ENCODE measurements at regions of chr9 and their contacts with region 1.

Region 1: DNA sequence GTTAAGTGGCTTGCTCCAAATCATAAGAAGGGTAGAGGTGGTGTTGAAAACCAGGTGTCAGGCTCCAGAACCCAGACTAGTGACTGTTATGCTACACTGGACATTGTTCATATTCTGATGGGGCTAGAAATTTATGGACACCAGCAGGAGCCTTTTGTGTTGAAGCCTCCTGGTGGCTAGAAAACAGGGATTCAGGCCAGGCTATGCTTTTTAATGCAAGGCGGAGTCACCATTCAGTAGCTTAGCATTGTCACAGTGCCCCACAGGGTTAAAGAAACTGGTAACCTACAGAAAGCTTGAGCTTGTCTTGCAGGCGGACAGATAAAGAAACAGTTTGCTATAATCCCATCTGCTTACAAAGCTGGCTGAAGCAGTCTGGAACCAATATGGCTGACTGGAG is 23.0 kb upstream of the GOLM1 start:
- DNase-seq: no peak
- H3K4me3 ChIP-seq: no peak overlapping the region
- H3K27ac ChIP-seq: no peak overlapping the region
- H3K4me1 ChIP-seq: no peaks in the 10 kb centered on the region
- H3K27me3 ChIP-seq: peaks cover 0 to 1% of the 10 kb centered on the region in 2 experiments
- CTCF ChIP-seq: no peak
- POLR2A ChIP-seq: no peak

Region 2: GRCh38 chr9:86034863-86035734 is 87.2 kb before region 1 on chr9:
- CTCF ChIA-PET with region 1: interaction called, 4 read pairs
- POLR2A ChIA-PET with region 1: no interaction called
- dilution Hi-C with region 1: no loop called
- intact Hi-C with region 1: loop called (anchors 1 kb)
- DNase-seq: peak; percentile 44
- H3K4me3 ChIP-seq: no peak overlapping the region
- H3K27ac ChIP-seq: no peak overlapping the region
- H3K4me1 ChIP-seq: no peaks in the 10 kb centered on the region
- H3K27me3 ChIP-seq: no peaks in the 10 kb centered on the region
- CTCF ChIP-seq: peak; percentile 63 to 77
- POLR2A ChIP-seq: no peak

Region 3: DNA sequence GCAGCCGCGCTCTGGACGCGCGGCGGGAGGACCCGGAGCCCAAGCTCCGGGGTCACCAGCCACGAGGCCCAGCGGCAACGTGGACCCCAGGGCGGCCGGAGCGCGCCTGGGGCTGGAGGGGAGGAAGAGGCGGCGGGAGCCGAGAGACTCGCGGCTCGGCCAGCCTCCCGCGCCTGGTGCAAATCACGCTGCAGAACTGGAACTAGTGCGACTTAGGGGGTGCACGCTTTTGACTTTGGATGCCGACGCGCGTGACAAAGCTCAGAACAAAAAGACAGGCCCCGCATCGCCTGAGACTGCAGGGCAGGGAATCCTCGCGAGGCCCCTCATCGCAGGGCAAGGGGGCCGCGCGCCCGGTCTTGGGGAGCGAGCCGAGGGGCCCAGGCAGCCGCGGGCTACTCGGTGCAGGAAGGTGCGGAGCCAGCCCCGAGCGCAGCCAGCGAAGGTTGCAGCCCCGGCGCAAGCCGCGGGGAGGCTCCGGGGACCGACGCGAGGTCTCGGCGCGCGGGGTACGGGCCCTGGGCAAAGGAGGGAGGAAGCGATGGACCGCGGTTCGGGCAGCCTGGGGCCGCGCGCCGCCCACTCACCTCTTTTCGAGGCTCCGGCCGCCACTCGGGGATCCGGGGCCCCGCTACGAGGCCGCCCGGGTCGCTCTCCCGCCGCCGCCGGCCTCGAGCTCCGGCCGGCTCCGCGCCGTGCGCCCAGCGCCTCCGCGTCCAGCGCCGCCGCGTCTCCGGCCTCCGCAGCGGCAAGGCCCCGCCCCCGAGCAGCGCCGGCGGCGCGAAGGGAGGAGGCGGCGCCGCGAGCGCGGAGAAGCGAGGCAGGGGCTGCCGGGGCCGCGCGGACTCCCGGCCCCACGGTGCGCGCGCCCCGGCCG is 23.2 kb before region 1 on chr9 and contains the start of gene GOLM1:
- CTCF ChIA-PET with region 1: no interaction called
- POLR2A ChIA-PET with region 1: no interaction called
- dilution Hi-C with region 1: no loop called
- intact Hi-C with region 1: no loop called
- DNase-seq: peak; percentile 58
- H3K4me3 ChIP-seq: peak within 1 kb of the TSS; percentile 63 to 88 (median 69)
- H3K27ac ChIP-seq: peak within 1 kb of the TSS; percentile 65
- H3K4me1 ChIP-seq: peaks cover 20% of the 10 kb centered on the region
- H3K27me3 ChIP-seq: no peaks in the 10 kb centered on the region
- CTCF ChIP-seq: peak in 1 of 2 donors; percentile 26
- POLR2A ChIP-seq: peak; percentile 43
- total RNA-seq, gene GOLM1: 94.9 and 108 TPM in 2 replicates

Measured in endothelial cell of umbilical vein (primary cell).